ENCODE measurements at regions of chr17 and their contacts with region 1.

Region 1: GRCh38 chr17:58976541-58976940 is 130.1 kb downstream of the TRIM37 start:
- DNase-seq: no peak
- H3K4me3 ChIP-seq: no peak overlapping the region
- H3K4me3 Mint-ChIP-seq: no peak overlapping the region
- H3K27ac Mint-ChIP-seq: no peak overlapping the region
- H3K4me1 ChIP-seq: no peaks in the 10 kb centered on the region
- H3K4me1 Mint-ChIP-seq: no peaks in the 10 kb centered on the region
- H3K27me3 ChIP-seq: no peaks in the 10 kb centered on the region
- H3K27me3 Mint-ChIP-seq: no peaks in the 10 kb centered on the region
- CTCF ChIP-seq: no peak

Region 2: GRCh38 chr17:58991718-58992331 is 15.3 kb after region 1 on chr17:
- CTCF ChIA-PET with region 1: no interaction called
- POLR2A ChIA-PET with region 1: no interaction called
- intact Hi-C with region 1: loop called (anchors 1 kb)
- DNase-seq: peak; percentile 30 to 75
- H3K4me3 ChIP-seq: no peak overlapping the region
- H3K4me3 Mint-ChIP-seq: no peak overlapping the region
- H3K27ac Mint-ChIP-seq: peak overlapping the region; percentile 69
- H3K4me1 ChIP-seq: peaks cover 23% of the 10 kb centered on the region
- H3K4me1 Mint-ChIP-seq: peaks cover 12% of the 10 kb centered on the region
- H3K27me3 ChIP-seq: no peaks in the 10 kb centered on the region
- H3K27me3 Mint-ChIP-seq: no peaks in the 10 kb centered on the region
- CTCF ChIP-seq: no peak